ENCODE measurements at regions of chr15 and their contacts with region 1.

Region 1: DNA sequence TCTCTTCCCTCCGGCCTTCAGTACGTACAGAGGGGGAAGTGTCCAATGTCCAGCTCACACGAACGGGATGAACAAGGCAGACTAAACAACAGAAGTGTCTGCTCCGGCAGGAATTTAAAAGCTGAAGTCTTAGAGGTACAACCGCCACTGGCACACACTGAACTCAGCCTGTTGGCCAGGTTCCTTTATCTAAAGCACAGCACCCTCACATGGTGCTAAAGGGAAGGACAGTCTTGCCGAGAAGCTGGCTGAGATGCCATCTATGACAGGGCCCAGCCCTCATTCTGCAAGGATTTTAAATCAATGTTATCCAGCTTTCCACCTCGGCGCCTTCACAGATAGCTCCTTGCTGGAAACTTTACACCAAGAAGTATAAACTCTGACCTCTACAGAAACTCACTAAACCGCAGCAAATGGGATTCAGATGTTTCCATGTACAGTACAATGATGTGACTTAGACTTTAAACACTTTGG is 2.8 kb downstream of the ADAMTS17 start:
- DNase-seq: peak in 4 of 6 donors; percentile 57 to 76 (median 62)
- ATAC-seq: peak; percentile 46 to 76 (median 67)
- H3K4me3 ChIP-seq: no peak overlapping the region
- H3K27ac ChIP-seq: no peak overlapping the region
- H3K4me1 ChIP-seq: peaks cover 0 to 8% (median 0%) of the 10 kb centered on the region in 3 donors
- H3K27me3 ChIP-seq: no peaks in the 10 kb centered on the region
- CTCF ChIP-seq: peak; percentile 57 to 79 (median 66)

Region 2: GRCh38 chr15:99931703-99932603 is 407.1 kb before region 1 on chr15:
- intact Hi-C with region 1: loop called in 2 of 3 experiments (anchors 10 kb)
- DNase-seq: no peak
- ATAC-seq: no peak
- H3K4me3 ChIP-seq: no peak overlapping the region
- H3K27ac ChIP-seq: no peak overlapping the region
- H3K4me1 ChIP-seq: no peaks in the 10 kb centered on the region
- H3K27me3 ChIP-seq: no peaks in the 10 kb centered on the region
- CTCF ChIP-seq: no peak